CD8-positive, alpha-beta T cell (primary cell): ENCODE measurements at regions of chr14 and their contacts with region 1.

Region 1: DNA sequence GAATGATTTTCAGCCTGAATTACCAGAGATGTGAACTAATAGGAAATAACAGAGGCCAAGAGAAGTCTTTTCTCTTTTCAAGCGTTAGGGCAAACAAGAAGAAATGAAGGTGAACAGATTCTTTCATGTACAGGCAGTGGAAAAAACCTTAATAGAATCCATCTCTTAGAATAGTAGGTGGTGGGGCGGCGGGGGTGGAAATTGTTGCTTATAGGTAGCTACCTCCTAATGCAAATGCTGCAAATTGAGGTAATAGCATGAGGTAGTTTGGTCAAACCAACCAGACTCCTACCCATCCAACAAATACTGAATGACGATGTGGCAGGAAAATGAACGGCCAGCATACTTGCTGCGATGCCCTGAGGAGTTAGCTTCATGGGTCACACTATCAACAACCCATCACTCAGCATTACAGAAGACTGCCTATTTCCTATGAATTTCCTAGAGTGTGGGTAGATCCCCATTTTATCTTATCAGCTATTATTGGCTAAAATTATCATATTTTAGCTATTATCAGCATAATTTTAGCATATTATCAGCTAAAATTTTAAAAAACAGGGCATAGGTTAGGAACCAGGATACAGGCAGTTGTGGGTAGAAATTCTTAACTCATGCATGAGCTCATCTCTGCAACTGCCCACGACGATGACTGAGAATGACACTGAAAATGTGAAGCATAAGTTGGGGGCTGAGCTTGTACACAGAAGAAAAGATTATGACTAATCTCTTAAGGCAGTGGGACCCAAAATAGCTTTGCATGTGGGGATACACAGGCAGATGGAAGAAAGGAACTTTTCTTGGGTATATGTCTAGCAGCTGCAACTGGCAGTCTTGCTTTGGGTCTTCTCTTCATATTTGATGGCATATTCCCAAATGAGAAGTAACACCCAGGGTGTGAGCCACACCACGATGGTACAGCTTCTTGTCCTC is 68.7 kb downstream of the NIN start:
- DNase-seq: no peak
- ATAC-seq: no peak
- H3K4me3 ChIP-seq: no peak overlapping the region
- H3K4me3 Mint-ChIP-seq: no peak overlapping the region
- H3K27ac ChIP-seq: no peak overlapping the region
- H3K27ac Mint-ChIP-seq: no peak overlapping the region
- H3K4me1 ChIP-seq: no peaks in the 10 kb centered on the region
- H3K4me1 Mint-ChIP-seq: peaks cover 7% of the 10 kb centered on the region
- H3K27me3 ChIP-seq: no peaks in the 10 kb centered on the region
- H3K27me3 Mint-ChIP-seq: no peaks in the 10 kb centered on the region
- CTCF ChIP-seq: no peak

Region 2: DNA sequence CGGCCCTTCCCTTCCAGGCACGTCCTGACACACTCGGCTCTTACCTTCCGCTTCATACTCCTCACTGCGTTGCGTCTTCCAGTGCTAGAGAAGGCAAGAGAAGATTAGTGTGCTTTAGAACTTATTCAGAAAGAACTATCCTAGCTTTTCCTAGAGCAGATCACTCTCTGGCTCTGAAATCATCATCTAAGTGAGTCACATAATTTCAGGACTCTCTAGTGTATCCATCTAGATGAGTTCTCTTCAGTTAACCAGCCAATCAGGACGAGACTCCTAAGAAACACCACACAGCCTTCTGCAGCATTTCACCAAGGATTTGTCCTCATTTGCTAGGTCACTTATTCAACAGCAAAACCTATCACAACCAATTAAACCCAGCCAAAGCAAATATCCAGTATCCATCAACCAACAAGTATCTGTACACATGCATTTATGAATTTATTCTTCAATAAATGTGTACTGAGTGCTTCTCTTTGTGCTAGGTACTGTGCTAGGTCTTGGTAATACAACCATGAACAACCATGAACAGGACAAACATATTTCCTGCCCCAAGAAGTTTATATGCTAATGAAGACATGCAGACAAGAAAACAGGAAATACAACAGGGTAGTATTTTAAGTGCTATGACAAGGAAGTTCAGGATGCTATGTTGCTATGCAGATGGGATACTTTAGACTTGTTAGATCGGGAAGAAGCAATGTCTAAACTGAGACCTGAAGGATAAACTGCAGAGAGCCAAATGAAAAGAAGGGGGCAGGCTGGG is 16.6 kb after region 1 on chr14:
- CTCF ChIA-PET with region 1: interaction called, 25 read pairs
- POLR2A ChIA-PET with region 1: interaction called, 3 read pairs
- intact Hi-C with region 1: no loop called
- DNase-seq: peak in 1 of 9 experiments; percentile 28
- ATAC-seq: peak; percentile 27
- H3K4me3 ChIP-seq: no peak overlapping the region
- H3K4me3 Mint-ChIP-seq: no peak overlapping the region
- H3K27ac ChIP-seq: peak overlapping the region in 1 of 2 experiments; percentile 17
- H3K27ac Mint-ChIP-seq: peak overlapping the region; percentile 80
- H3K4me1 ChIP-seq: peaks cover 57% of the 10 kb centered on the region
- H3K4me1 Mint-ChIP-seq: peaks cover 68% of the 10 kb centered on the region
- H3K27me3 ChIP-seq: no peaks in the 10 kb centered on the region
- H3K27me3 Mint-ChIP-seq: no peaks in the 10 kb centered on the region
- CTCF ChIP-seq: no peak